ENCODE measurements at regions of chr6 and their contacts with region 1.

Region 1: GRCh38 chr6:30396833-30397479 is 52.0 kb downstream of the RPP21 start:
- DNase-seq: peak; percentile 94
- ATAC-seq: peak; percentile 92

Region 2: GRCh38 chr6:30200551-30201281 is 196.2 kb before region 1 on chr6:
- intact Hi-C with region 1: no loop called
- DNase-seq: no peak
- ATAC-seq: no peak

Region 3: DNA sequence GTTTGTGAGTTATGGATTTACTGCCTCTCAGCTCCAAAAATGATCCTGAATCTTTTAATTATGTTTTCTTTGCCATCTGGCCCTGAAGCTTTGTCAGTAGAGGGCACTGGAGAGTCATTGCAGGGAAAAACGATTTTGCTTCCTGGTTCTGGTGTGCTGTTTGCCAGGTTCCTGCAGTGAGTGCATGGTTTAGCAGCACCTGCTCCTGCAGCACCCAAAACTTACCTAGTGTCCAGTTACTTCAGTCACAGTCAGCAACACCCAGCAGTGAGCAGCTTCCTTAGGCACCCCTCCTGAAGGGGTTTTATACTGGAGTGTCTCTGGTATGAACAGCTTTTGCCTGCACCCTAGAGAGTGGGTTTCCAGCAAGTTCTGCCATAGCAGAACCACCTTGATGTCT is 177.7 kb before region 1 on chr6:
- intact Hi-C with region 1: loop called (anchors 2 kb)
- DNase-seq: no peak
- ATAC-seq: no peak

Region 4: DNA sequence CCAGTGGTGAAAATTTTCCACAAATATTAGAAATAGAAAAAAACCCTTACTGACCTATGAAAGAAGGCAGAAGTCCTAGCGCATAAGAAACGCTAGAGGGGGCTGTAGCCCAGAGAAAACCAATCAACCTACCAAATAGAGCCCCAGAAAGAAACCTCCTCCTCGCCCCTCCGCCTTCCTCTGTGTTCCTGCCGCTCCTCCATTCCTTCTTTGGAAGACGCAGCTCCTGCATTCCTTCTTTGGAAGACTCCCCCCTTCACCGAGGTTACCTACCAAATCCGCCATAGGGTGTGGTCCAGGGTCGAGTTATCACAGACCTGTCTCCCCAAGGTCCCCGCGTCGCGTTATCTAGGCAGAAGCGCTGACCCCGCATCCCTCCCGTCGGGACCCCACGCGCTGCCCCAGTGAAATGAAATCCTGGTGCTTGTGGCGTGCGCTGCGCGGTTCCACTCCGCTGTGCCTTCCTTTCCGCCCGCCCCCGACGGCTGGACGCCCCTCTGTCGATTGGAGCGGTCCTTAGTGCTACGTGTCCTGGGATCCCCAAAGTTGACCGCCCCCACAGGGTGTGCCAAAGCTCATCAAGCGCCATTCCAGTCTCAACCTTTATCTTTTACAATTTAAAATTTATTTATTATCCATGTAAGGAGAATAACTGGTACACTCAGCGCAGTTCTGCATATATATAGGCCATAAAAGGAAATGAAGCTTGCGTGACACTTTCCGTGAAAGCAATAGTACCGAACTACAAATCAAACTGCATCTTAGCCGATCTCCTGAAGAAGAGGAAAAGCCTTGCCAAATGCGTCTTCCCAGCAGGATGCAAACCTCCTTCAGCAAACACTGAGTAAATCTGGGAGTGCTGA is 39.0 kb before region 1 on chr6:
- intact Hi-C with region 1: loop called (anchors 2 kb)
- DNase-seq: no peak
- ATAC-seq: peak; percentile 50

Measured in Right ventricle myocardium inferior (tissue), 1 donor.